Colonic mucosa (tissue), 4 donors: ENCODE measurements at regions of chr2 and their contacts with region 1.

Region 1: DNA sequence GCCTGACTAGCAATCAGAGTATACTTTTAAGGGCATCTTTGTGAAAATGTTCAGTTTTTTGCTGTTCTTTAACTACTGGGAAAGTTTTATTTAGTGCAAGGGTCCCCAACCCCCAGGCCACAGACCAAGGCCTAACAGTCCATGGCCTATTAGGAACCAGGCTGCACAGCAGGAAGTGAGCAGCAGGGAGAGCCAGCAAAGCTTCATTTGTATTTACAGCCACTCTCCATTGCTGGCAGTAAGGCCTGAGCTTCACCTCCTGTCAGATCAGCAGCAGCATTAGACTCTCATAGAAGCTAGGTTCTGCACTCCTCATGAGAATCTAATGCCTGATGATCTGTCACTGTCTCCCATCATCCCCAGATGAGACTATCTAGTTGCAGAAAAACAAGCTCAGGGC is 17.1 kb upstream of the NR4A2 start:
- DNase-seq: no peak
- H3K4me3 ChIP-seq: no peak overlapping the region
- H3K27ac ChIP-seq: no peak overlapping the region
- H3K4me1 ChIP-seq: peaks cover 4% of the 10 kb centered on the region
- H3K27me3 ChIP-seq: no peaks in the 10 kb centered on the region
- CTCF ChIP-seq: no peak

Region 2: GRCh38 chr2:155442755-155443372 is 906.7 kb before region 1 on chr2:
- intact Hi-C with region 1: no loop called
- DNase-seq: no peak
- H3K4me3 ChIP-seq: no peak overlapping the region
- H3K27ac ChIP-seq: no peak overlapping the region
- H3K4me1 ChIP-seq: no peaks in the 10 kb centered on the region
- H3K27me3 ChIP-seq: no peaks in the 10 kb centered on the region
- CTCF ChIP-seq: no peak

Region 3: DNA sequence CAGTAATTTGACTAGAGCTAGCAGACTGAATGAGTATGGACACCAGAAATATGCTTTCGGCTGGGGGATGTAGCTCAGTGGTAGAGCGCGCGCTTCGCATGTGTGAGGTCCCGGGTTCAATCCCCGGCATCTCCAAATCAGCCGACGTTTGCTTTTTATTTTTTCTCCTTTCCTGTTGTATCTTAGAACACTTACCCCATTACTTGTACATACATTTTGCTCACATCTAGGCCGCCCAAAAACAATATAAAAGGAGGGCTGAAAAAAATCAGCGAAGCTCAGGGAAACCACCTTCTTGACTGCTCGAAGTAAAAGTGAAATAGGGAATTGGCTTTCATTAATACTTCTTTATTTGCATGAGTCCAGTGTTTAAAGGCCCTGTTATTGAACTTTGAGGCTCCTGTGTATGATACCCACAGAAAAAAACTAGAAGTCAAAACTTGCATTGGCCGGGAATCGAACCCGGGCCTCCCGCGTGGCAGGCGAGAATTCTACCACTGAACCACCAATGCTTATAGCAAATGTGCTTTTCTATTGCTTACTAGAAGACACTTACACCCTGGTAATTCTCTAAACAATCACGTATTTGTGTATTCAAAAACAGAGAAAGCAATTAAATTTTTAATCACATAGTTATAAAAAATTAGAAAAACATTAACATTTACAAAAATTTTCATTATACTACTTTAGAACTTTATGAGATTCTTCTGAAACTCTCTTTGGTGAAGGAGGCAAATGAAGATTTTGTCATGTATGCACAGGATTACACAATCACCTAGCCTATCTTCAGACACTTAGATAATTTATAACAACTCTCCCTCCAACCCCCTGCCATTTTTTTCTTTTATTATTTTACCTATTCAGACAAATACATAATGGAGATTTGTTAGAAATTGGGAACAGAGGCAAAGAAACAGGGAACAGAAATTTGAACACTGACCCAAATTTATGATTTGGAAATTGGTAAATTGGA is 51.4 kb after region 1 on chr2:
- intact Hi-C with region 1: loop called (anchors 5 kb)
- DNase-seq: peak; percentile 80
- H3K4me3 ChIP-seq: peak overlapping the region; percentile 73
- H3K27ac ChIP-seq: peak overlapping the region; percentile 92
- H3K4me1 ChIP-seq: peaks cover 6% of the 10 kb centered on the region
- H3K27me3 ChIP-seq: no peaks in the 10 kb centered on the region
- CTCF ChIP-seq: no peak